Activated CD4-positive, alpha-beta T cell treated with anti-CD3 and anti-CD28 coated beads for 36 hours (primary cell): ENCODE measurements at regions of chr1 and their contacts with region 1.

Region 1: GRCh38 chr1:9784508-9785133 is 39.1 kb downstream of the CLSTN1 start:
- DNase-seq: peak; percentile 83
- ATAC-seq: peak; percentile 45
- H3K4me3 Mint-ChIP-seq: no peak overlapping the region
- H3K27ac Mint-ChIP-seq: no peak overlapping the region
- H3K4me1 Mint-ChIP-seq: peaks cover 39% of the 10 kb centered on the region
- H3K27me3 Mint-ChIP-seq: no peaks in the 10 kb centered on the region

Region 2: GRCh38 chr1:9798236-9799130 is 13.9 kb after region 1 on chr1:
- CTCF ChIA-PET with region 1: interaction called, 44 read pairs
- POLR2A ChIA-PET with region 1: no interaction called
- intact Hi-C with region 1: loop called in 1 of 2 experiments (anchors 1 kb)
- DNase-seq: no peak
- ATAC-seq: peak; percentile 39
- H3K4me3 Mint-ChIP-seq: no peak overlapping the region
- H3K27ac Mint-ChIP-seq: peak overlapping the region; percentile 9
- H3K4me1 Mint-ChIP-seq: peaks cover 56% of the 10 kb centered on the region
- H3K27me3 Mint-ChIP-seq: no peaks in the 10 kb centered on the region

Region 3: DNA sequence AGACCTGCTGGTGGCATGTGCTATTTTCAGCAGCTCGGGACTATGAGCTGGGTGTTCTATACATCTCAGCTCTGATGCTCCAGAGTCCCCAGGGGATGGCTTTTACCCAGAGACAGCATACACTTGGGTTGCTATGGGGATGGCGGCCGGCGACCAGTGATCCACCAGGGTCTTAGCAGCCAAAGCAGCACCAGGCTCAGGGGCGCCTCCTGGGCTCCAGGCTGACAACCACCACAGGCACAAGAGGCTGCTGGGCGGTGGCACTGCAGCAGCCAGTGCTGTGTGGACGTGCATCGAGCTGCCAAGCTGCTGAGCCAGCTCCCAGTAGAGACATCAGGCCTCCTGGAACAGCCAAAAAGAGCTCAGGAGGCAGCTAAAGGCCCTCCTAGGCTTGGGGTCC is 76.7 kb after region 1 on chr1:
- CTCF ChIA-PET with region 1: interaction called, 221 read pairs
- POLR2A ChIA-PET with region 1: no interaction called
- intact Hi-C with region 1: no loop called
- DNase-seq: no peak
- ATAC-seq: no peak
- H3K4me3 Mint-ChIP-seq: no peak overlapping the region
- H3K27ac Mint-ChIP-seq: no peak overlapping the region
- H3K4me1 Mint-ChIP-seq: peaks cover 10% of the 10 kb centered on the region
- H3K27me3 Mint-ChIP-seq: no peaks in the 10 kb centered on the region

Region 4: DNA sequence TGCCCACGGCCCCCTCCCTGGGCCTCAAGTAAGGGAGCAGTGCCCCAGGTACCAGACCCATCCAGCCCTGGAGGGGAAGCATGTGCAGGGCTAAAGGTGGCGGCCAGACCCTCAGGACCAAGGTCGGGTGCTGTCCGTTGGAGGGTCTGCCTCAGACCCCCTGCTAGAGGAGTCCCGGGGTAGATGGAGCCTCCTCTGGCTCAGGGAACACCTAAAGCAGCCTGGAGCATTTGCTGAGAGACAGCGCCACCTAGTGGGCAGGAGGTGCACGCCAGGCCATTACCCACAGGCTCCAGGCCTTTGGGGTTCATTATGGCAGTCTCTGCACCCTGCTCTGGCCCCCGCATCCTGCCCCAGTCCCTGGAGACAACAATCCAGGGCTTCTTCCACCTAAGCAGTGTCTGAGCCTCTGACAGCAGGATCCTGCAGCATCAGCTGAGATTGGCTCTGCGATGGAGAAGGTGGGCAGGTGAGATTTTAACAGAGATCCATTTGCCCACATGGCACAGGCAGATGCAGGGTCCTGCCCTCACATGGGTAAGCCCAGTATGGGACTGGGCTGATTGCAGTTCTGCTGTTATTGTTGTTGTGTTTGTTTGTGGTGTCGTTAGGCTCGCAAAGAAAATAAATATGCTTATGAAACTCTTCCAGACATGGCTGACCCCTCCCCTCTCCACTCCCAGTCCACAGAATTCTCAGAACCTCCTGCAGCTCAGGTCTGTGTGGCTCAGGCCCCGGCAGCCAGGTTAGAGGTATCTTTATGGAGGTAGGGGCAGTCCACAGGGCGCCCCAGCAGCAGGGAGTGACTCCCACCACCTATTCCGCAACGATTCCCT is 83.0 kb after region 1 on chr1:
- CTCF ChIA-PET with region 1: interaction called, 221 read pairs
- POLR2A ChIA-PET with region 1: no interaction called
- intact Hi-C with region 1: loop called (anchors 1 kb)
- DNase-seq: peak; percentile 93
- ATAC-seq: peak; percentile 99
- H3K4me3 Mint-ChIP-seq: no peak overlapping the region
- H3K27ac Mint-ChIP-seq: no peak overlapping the region
- H3K4me1 Mint-ChIP-seq: no peaks in the 10 kb centered on the region
- H3K27me3 Mint-ChIP-seq: no peaks in the 10 kb centered on the region